PC-9 (cell line): ENCODE measurements at regions of chr13 and their contacts with region 1.

Region 1: GRCh38 chr13:27449936-27450828 is at the start of gene MTIF3:
- DNase-seq: peak; percentile 90 to 92
- H3K4me3 ChIP-seq: peak within 1 kb of the TSS; percentile 83
- H3K27ac ChIP-seq: peak within 1 kb of the TSS; percentile 94
- H3K4me1 ChIP-seq: peaks cover 25% of the 10 kb centered on the region
- H3K27me3 ChIP-seq: no peaks in the 10 kb centered on the region
- CTCF ChIP-seq: no peak
- total RNA-seq, gene MTIF3: 22.9 and 28.3 TPM in 2 replicates

Region 2: DNA sequence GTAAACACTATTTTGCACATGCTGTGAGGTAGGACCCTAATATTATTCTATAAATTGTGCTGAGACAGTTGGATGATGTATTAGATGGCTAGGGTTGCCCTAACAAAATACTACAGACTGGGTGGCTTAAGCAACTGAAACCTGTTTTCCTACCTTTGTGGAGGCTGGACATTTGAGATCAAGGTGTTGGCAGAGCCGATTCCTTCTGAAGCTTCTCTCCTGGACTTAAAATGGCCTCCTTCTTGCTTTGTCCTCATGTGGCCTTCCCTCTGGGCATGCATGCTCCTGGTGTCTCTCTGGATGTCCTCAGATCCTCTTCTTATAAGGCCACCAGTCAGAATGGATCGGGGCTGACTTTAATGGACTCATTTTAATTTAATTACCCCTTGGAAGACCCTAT is 1289.6 kb before region 1 on chr13:
- CTCF ChIA-PET with region 1: no interaction called
- POLR2A ChIA-PET with region 1: no interaction called
- intact Hi-C with region 1: no loop called
- DNase-seq: no peak
- H3K4me3 ChIP-seq: no peak overlapping the region
- H3K27ac ChIP-seq: no peak overlapping the region
- H3K4me1 ChIP-seq: no peaks in the 10 kb centered on the region
- H3K27me3 ChIP-seq: peaks cover 46% of the 10 kb centered on the region
- CTCF ChIP-seq: no peak

Region 3: GRCh38 chr13:27424246-27425157 is 25.7 kb before region 1 on chr13 and contains the start of gene GTF3A:
- CTCF ChIA-PET with region 1: interaction called, 4 read pairs
- POLR2A ChIA-PET with region 1: interaction called, 5 read pairs
- intact Hi-C with region 1: loop called (anchors 1 kb)
- DNase-seq: peak; percentile 52 to 83
- H3K4me3 ChIP-seq: peak within 1 kb of the TSS; percentile 89
- H3K27ac ChIP-seq: peak within 1 kb of the TSS; percentile 78
- H3K4me1 ChIP-seq: peaks cover 37% of the 10 kb centered on the region
- H3K27me3 ChIP-seq: no peaks in the 10 kb centered on the region
- CTCF ChIP-seq: no peak
- total RNA-seq, gene GTF3A: 105 and 130 TPM in 2 replicates

Region 4: GRCh38 chr13:27792393-27793218 is 342.4 kb after region 1 on chr13 and contains the start of gene GSX1:
- CTCF ChIA-PET with region 1: no interaction called
- POLR2A ChIA-PET with region 1: no interaction called
- intact Hi-C with region 1: no loop called
- DNase-seq: no peak
- H3K4me3 ChIP-seq: peak within 1 kb of the TSS; percentile 44; the same call in 1 of the 2 replicates
- H3K27ac ChIP-seq: no peak within 1 kb of the TSS
- H3K4me1 ChIP-seq: no peaks in the 10 kb centered on the region
- H3K27me3 ChIP-seq: peaks cover 73% of the 10 kb centered on the region
- CTCF ChIP-seq: no peak
- total RNA-seq, gene GSX1: not detected in 2 replicates